PC-9 (cell line): ENCODE measurements at regions of chr20 and their contacts with region 1.

Region 1: GRCh38 chr20:63381807-63382322 is 20.7 kb upstream of the CHRNA4 start:
- DNase-seq: peak in 1 of 2 experiments; percentile 34
- H3K4me3 ChIP-seq: no peak overlapping the region
- H3K27ac ChIP-seq: no peak overlapping the region
- H3K4me1 ChIP-seq: no peaks in the 10 kb centered on the region
- H3K27me3 ChIP-seq: peaks cover 97% of the 10 kb centered on the region
- CTCF ChIP-seq: peak; percentile 100

Region 2: DNA sequence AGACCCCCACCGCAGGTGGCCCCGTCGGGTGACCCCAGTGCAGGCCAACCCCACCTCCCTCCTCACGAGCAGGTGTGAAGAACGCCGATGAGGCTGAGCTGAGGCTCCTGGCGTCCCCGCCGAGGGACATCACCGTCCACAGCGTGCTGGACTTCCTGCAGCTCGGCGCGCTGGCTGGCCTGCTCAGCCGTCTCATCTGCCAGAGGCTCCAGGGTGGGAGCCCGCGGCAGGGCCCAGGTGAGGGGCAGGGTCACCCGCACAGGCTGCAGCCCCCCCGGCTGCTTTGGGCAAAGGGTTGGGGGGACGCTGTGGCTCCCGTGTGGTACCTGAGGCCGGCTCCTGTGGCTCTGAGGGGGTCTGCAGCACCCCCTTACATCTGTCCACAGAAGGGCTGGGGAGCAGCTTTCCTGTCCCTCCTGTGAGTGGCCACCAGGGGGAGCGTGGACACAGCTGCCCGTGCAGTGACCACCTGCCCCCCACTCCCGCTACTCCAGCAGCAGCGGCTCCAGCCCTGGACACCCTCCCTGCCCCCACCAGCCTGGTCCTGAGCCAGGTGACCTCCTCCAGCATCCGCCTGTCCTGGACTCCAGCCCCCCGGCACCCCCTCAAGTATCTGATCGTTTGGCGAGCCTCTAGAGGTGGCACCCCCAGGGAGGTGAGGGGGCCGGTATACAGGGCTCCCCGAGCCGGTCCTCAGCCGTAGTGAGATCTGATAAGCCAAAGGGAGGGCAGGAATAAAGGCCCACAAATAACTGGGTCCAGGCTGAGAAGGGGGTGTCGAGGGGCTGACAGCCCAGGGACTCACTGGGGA is 72.4 kb before region 1 on chr20:
- CTCF ChIA-PET with region 1: interaction called, 9 read pairs
- POLR2A ChIA-PET with region 1: no interaction called
- intact Hi-C with region 1: loop called (anchors 2 kb)
- DNase-seq: peak in 1 of 2 experiments; percentile 50
- H3K4me3 ChIP-seq: no peak overlapping the region
- H3K27ac ChIP-seq: no peak overlapping the region
- H3K4me1 ChIP-seq: no peaks in the 10 kb centered on the region
- H3K27me3 ChIP-seq: peaks cover 96% of the 10 kb centered on the region
- CTCF ChIP-seq: peak; percentile 96

Region 3: DNA sequence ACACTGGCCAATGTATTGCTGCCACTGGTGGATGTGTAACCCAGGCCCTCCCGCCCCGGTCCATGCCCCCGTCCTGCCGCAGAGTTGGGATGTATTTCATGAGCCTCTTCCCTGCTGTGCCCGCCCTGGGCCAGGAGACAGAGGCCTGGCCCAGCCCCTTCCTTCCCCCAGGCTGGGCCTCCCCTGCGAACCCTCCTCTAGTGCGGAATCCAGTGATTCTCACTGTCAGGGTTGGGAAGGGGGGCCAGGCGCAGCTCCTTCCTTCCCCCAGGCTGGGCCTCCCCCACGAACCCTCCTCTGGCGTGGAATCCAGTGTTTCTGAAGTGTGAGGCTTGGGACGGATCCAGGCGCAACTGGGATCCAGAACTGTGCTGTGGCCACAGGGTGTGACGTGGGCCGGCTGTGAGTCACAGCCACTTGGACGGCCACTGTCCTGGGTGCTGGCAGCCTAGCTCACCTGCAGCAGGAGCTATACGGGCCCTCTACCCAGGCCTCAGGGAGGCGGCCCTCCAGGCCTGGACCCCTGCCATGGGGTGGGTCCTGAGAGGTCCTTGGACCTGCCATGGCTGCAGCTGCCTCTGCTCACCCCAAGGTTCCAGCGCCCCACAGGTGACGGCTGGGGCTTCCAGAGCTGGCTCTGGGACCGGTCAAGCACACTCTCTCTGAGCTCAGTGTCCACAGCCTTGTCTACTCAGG is 60.6 kb before region 1 on chr20:
- CTCF ChIA-PET with region 1: no interaction called
- POLR2A ChIA-PET with region 1: no interaction called
- intact Hi-C with region 1: no loop called
- DNase-seq: no peak
- H3K4me3 ChIP-seq: no peak overlapping the region
- H3K27ac ChIP-seq: no peak overlapping the region
- H3K4me1 ChIP-seq: no peaks in the 10 kb centered on the region
- H3K27me3 ChIP-seq: peaks cover 92% of the 10 kb centered on the region
- CTCF ChIP-seq: no peak

Region 4: GRCh38 chr20:63602321-63602720 is 220.5 kb after region 1 on chr20:
- CTCF ChIA-PET with region 1: no interaction called
- POLR2A ChIA-PET with region 1: no interaction called
- intact Hi-C with region 1: no loop called
- DNase-seq: no peak
- H3K4me3 ChIP-seq: no peak overlapping the region
- H3K27ac ChIP-seq: no peak overlapping the region
- H3K4me1 ChIP-seq: peaks cover 14% of the 10 kb centered on the region; the same call in 1 of the 2 replicates
- H3K27me3 ChIP-seq: no peaks in the 10 kb centered on the region
- CTCF ChIP-seq: no peak